Heart right ventricle (tissue), 16 donors: ENCODE measurements at regions of chr21 and their contacts with region 1.

Region 1: DNA sequence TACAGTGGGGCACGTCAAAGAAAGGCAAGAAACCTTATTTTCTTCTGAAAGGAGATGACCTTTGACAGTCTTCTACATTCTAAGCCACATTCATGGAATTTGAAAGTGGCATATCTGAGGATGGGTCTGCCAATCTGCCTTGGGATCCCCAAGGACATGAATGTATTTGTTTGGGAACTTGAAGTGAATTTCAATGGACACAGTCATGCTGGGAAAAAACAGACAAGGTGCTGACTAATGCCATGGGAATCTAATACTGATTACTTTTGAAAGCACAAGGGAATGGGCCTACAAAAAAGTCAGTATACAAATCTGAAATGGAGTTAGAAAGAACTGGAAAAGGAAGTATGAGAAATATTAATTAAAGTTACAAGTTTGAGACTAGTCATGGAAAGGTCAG is 128.8 kb downstream of the KCNJ6 start:
- DNase-seq: no peak
- ATAC-seq: no peak
- H3K4me3 ChIP-seq: no peak overlapping the region
- H3K27ac ChIP-seq: no peak overlapping the region
- H3K4me1 ChIP-seq: no peaks in the 10 kb centered on the region
- H3K27me3 ChIP-seq: peaks cover 0 to 1% (median 0%) of the 10 kb centered on the region in 7 donors
- CTCF ChIP-seq: no peak

Region 2: DNA sequence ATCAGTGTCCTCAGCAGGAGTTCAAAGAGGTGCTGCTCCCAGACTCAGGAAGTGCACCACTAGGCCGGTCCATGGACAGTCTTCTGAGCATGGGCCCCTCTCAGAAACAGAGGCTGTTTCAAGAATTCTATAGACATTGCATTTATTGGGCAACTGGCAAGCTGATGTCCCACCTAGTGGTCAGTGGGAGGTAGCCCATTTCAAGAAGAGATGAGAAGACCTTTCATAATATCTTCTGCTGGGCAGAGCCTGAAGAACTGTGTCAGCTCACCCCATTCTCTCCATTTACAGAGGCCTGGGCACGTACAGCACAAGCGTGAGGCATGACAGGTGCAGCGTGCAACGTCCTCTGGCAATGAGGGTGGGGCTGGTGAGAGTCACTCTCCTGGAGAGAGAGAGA is 204.9 kb before region 1 on chr21:
- intact Hi-C with region 1: no loop called
- DNase-seq: peak in 1 of 2 donors; percentile 39
- ATAC-seq: peak in 7 of 8 donors; percentile 51 to 81 (median 77)
- H3K4me3 ChIP-seq: no peak overlapping the region
- H3K27ac ChIP-seq: no peak overlapping the region
- H3K4me1 ChIP-seq: peaks cover 0 to 13% (median 0%) of the 10 kb centered on the region in 9 donors
- H3K27me3 ChIP-seq: no peaks in the 10 kb centered on the region
- CTCF ChIP-seq: peak; percentile 39 to 75 (median 66)

Region 3: DNA sequence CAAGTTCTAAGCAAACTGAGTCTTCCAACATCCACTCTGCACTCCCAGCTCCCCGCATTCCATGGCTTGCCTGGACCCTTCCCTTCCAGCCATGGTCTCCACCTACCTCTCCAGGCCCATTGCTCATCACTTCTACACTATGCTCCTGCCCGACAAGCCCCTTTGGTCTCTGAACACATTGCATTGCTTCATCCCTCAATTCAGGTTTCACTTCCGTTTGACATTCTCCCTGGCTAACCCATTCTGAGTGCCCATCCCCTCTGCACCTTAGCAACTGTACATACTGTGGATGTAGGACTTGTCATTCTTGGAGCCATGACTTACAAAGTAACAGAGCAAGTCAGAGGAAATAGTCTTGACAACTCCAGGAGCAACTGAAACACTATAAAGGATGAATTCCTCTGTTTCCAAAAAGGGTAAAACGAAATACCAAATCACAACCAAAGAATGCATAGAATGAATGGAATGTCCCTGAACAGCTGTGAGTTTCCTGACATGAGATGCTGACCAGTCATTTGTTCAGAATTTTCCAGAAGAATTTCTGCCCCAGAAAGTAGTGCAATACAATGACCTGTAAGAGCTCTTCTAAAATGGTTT is 62.1 kb after region 1 on chr21:
- intact Hi-C with region 1: loop called in 1 of 10 experiments (anchors 10 kb)
- DNase-seq: no peak
- ATAC-seq: no peak
- H3K4me3 ChIP-seq: no peak overlapping the region
- H3K27ac ChIP-seq: no peak overlapping the region
- H3K4me1 ChIP-seq: no peaks in the 10 kb centered on the region
- H3K27me3 ChIP-seq: peaks cover 0 to 32% (median 9%) of the 10 kb centered on the region in 7 donors
- CTCF ChIP-seq: no peak